ENCODE measurements at regions of chr16 and their contacts with region 1.

Region 1: DNA sequence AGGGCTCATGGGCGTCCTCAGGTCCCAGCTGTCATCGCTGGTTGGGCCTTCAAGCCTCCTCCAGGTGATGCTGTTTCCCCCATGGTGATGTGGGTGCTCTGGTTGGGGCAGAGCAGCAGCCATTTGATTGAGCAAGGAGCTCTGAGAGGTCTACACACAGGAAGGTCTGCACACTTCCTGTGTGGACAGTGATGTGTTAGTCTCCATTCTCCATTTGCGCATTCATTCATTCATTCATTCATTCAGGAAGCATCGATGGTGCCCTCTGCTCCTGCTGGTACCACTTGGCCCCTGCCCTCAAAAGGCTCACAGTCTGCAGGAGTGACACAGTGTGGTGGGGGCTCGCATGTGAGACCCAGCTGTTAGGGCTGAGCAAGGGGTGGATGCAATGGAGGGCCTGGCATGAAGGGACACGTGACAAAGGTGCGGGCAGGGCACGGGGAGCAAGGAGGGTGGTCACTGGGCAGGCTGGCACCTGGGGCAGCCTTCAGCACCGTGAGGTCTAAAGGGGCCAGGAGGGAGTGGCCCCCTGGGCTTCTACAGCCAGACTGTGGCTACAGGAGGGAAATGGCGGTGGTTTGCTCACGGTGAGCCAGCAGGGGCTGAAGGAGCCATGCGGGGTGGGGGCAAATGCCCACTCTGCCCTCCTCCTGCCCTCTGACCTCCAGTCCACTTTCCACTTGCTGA is 1.5 kb downstream of the ADGRG3 start:
- DNase-seq: no peak
- ATAC-seq: no peak
- H3K4me3 Mint-ChIP-seq: no peak overlapping the region
- H3K27ac Mint-ChIP-seq: no peak overlapping the region
- H3K4me1 Mint-ChIP-seq: no peaks in the 10 kb centered on the region
- H3K27me3 Mint-ChIP-seq: peaks cover 12% of the 10 kb centered on the region
- CTCF ChIP-seq: no peak

Region 2: GRCh38 chr16:57432989-57433388 is 236.6 kb before region 1 on chr16:
- CTCF ChIA-PET with region 1: no interaction called
- POLR2A ChIA-PET with region 1: no interaction called
- intact Hi-C with region 1: no loop called
- DNase-seq: no peak
- ATAC-seq: no peak
- H3K4me3 Mint-ChIP-seq: no peak overlapping the region
- H3K27ac Mint-ChIP-seq: no peak overlapping the region
- H3K4me1 Mint-ChIP-seq: no peaks in the 10 kb centered on the region
- H3K27me3 Mint-ChIP-seq: no peaks in the 10 kb centered on the region
- CTCF ChIP-seq: no peak

Region 3: DNA sequence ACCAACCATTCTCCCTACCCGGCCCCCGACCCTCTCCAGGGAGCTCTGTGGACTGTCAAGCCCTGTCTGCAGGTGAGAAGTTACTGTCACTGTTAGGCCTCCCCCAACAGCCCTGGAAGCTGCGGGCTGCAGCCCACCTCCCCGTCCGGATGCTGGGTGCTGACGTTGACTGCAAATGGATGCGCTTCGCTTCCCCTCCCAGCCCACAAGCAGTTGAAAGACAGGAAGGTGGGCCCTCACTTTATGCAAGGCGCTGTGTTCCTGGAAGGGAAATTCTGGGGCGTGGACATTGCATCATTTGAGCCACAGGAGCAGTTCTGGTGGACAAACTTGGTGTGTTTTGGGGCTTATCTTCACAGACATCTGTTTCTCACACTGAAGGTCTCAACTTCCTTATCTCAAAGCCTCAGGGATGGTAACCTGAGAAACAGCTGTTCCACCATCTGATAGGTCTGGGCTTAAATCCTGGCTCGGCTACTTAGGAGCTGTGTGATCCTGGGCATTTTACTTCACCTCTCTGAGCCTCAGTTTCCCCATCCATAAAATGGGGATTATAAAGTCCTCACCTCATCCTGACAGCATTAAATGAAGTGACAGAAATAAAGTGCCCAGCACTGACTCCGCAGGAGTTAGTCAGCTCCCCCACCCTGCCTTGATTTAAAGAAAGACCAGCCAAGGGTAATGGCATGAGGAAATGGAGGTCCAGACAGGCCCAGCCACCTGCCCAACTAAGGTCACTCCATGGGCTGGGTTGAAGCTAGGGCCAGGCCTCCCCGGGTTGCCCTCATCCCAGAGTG is 20.3 kb after region 1 on chr16:
- CTCF ChIA-PET with region 1: no interaction called
- POLR2A ChIA-PET with region 1: interaction called, 14 read pairs
- intact Hi-C with region 1: no loop called
- DNase-seq: peak; percentile 45
- ATAC-seq: peak; percentile 74
- H3K4me3 Mint-ChIP-seq: peak overlapping the region; percentile 36
- H3K27ac Mint-ChIP-seq: peak overlapping the region; percentile 82
- H3K4me1 Mint-ChIP-seq: peaks cover 28% of the 10 kb centered on the region
- H3K27me3 Mint-ChIP-seq: no peaks in the 10 kb centered on the region
- CTCF ChIP-seq: no peak

Region 4: DNA sequence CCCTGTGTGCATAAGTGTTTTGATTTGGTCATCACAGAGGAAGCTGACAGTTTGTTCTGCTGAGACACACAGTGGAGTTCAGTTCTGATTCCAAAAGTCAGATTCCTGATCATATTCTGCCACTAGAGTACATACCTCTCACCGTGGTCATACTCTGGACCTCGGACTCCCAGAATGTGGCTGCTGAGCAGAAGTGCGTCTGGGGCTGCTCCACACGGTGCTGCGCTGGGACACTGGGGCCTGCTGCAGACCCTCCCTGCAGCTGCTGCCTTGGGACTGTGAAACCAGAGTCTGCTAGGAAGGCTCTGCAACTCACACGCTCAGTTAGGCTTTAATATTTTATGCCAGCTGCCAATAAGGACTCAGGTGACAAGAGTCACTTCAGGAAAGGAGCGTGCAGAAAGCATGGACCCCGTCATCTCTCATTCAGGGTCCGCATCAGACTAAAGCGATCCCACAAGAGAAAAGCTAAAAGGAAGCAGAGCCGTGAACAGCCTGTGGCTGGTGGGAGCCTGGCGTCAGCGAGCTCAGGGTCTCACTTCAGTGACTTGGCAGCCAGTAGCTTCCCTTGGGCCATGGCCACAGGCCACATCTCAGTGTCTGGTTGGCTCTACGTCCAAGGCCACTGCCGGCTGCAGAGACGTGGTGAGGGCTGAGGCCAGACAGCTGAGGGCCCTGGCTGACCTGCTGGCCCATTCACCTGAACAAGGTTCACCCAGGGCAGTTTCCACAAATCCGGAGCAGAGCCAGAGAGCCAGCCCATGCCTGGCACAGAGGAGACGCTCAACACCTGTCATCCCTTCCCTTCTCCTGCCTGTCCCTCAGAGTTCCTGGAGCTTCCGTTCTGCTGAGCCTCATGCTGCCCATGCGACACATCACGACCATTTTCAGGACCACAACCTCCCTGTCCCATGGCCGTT is 157.3 kb after region 1 on chr16:
- CTCF ChIA-PET with region 1: no interaction called
- POLR2A ChIA-PET with region 1: no interaction called
- intact Hi-C with region 1: no loop called
- DNase-seq: no peak
- ATAC-seq: no peak
- H3K4me3 Mint-ChIP-seq: no peak overlapping the region
- H3K27ac Mint-ChIP-seq: no peak overlapping the region
- H3K4me1 Mint-ChIP-seq: no peaks in the 10 kb centered on the region
- H3K27me3 Mint-ChIP-seq: peaks cover 8% of the 10 kb centered on the region
- CTCF ChIP-seq: no peak